Activated CD8-positive, alpha-beta memory T cell treated with anti-CD3 and anti-CD28 coated beads, Interleukin-2, amount 10 ng/mL, durations not matched to agents 7 days and 5 days (primary cell): ENCODE measurements at regions of chr11 and their contacts with region 1.

Region 1: DNA sequence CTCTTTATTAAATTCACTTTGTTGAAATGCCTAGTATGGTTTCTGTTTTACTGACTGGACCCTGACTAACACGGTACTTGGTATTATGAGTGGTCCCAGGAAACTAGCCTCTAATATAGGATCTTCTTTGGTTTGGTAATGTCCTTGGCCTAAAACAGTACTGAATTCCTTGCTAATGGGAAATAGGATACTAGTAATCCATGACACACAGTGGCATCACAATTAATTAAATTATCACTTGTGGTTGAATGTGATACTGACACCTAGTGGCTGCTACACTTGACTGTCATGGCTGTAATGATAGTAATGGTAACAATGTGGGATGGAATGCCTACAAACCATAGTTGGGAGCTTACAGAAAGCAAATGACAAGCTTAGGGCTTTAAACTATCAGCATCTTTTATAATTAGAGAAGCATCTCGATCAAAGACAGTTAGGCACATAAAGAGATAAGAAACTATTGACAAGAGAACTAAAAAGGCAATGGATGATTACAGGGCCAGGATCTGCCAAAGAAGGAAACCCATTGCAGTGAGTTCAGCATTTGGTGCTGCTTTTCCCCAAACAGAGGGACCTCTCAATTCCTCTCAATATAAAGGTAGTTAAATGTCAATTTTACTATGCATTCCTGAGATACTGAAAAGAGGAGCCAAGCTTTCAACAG is 8.6 kb downstream of the DNHD1 start:
- DNase-seq: no peak
- ATAC-seq: peak; percentile 63
- H3K4me3 Mint-ChIP-seq: no peak overlapping the region
- H3K27ac Mint-ChIP-seq: no peak overlapping the region
- H3K4me1 Mint-ChIP-seq: peaks cover 4% of the 10 kb centered on the region
- H3K27me3 Mint-ChIP-seq: no peaks in the 10 kb centered on the region

Region 2: GRCh38 chr11:6389921-6390724 is 115.6 kb before region 1 on chr11 and contains the start of gene SMPD1:
- CTCF ChIA-PET with region 1: interaction called, 11 read pairs
- DNase-seq: peak; percentile 97
- ATAC-seq: peak; percentile 92
- H3K4me3 Mint-ChIP-seq: peak within 1 kb of the TSS; percentile 91
- H3K27ac Mint-ChIP-seq: peak within 1 kb of the TSS; percentile 94
- H3K4me1 Mint-ChIP-seq: peaks cover 38% of the 10 kb centered on the region
- H3K27me3 Mint-ChIP-seq: no peaks in the 10 kb centered on the region
- total RNA-seq, gene SMPD1: 38.9 to 41.9 TPM

Region 3: DNA sequence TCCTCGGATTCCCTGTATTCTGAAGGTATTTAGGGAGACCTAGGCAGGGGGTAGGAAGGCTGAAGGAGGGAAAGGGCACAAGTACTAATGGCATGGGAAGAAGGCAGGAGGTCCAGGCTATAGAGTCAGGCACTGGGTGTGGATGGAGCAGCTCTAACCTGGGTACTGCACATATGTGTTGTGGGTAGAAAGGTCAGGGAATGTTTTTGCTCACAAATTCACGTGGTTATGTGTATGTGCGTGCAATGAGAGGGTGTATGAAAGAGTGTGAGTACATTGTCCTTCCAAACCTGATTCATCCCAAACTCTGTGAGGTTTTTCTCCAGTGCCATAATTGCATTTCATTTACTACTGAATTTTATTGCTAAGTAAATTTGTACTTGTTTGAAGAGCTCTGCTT is 14.6 kb after region 1 on chr11:
- CTCF ChIA-PET with region 1: interaction called, 14 read pairs
- DNase-seq: no peak
- ATAC-seq: no peak
- H3K4me3 Mint-ChIP-seq: no peak overlapping the region
- H3K27ac Mint-ChIP-seq: no peak overlapping the region
- H3K4me1 Mint-ChIP-seq: peaks cover 8% of the 10 kb centered on the region
- H3K27me3 Mint-ChIP-seq: no peaks in the 10 kb centered on the region